ENCODE measurements at regions of chr15 and their contacts with region 1.

Region 1: GRCh38 chr15:39934397-39935071 is 619 bp downstream of the EIF2AK4 start:
- DNase-seq: no peak
- H3K4me3 Mint-ChIP-seq: peak overlapping the region; percentile 90
- H3K27ac Mint-ChIP-seq: peak overlapping the region; percentile 89
- H3K4me1 Mint-ChIP-seq: peaks cover 28% of the 10 kb centered on the region
- H3K27me3 Mint-ChIP-seq: no peaks in the 10 kb centered on the region
- CTCF ChIP-seq: no peak

Region 2: DNA sequence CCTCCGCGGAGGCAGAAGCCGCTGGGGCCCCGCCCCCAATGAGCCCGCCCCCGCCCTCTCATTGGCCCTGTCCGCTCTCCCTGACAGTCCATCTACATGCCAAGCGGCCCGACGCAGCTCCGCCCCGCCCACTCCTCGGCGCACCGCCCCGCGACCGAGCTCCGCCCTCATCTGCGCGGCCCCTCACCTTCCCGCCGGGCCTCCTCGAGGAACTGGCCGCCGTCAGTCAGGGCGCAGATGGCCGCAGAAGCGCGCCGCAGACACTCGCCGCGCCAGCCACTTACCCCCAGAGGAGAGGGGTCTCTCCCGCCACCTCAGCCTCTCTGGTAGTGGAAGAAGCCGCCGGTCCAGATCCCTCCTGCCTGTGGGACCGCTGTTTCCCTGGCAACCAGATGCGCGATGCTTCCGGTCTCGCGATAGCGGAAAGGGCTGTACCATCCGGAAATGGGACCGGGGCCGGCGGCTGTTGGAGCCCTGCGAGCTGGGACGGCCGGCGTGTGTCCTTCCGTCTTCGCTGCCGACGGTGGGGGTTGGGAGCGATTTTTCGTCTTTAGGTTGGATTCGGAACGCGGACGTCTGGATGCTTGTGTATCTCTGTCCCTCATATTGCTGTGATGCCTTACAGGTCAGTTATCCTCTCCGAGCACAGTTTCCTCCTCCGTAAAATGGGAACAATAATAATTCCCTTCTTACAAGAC is 151.9 kb before region 1 on chr15 and contains the start of gene FSIP1:
- CTCF ChIA-PET with region 1: interaction called, 14 read pairs
- POLR2A ChIA-PET with region 1: interaction called, 22 read pairs
- intact Hi-C with region 1: loop called (anchors 2 kb)
- DNase-seq: peak; percentile 96
- H3K4me3 Mint-ChIP-seq: peak within 1 kb of the TSS; percentile 91
- H3K27ac Mint-ChIP-seq: peak within 1 kb of the TSS; percentile 1
- H3K4me1 Mint-ChIP-seq: peaks cover 15% of the 10 kb centered on the region
- H3K27me3 Mint-ChIP-seq: no peaks in the 10 kb centered on the region
- CTCF ChIP-seq: no peak
- total RNA-seq, gene FSIP1: 2.2 and 3.2 TPM in 2 replicates

Region 3: DNA sequence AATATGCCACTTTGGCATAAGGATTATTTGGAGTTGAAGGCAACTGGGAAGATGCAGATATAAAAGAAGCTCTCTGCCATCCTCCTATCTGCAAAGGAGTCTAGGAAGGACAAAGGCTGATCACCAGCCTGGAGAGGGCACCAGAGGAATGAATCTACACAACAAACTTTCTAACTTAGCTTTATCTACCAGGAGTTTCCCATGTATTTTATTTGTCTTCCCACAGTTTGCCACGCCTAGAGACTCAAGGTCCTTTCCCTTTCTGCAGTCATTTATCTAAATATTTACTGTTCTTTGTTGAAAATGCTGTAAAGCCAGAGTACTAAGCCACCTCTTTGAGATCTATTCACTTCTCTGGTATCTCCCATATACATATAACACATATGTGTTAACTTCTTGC is 46.7 kb before region 1 on chr15:
- CTCF ChIA-PET with region 1: interaction called, 33 read pairs
- POLR2A ChIA-PET with region 1: interaction called, 24 read pairs
- intact Hi-C with region 1: loop called (anchors 2 kb)
- DNase-seq: peak; percentile 65
- H3K4me3 Mint-ChIP-seq: no peak overlapping the region
- H3K27ac Mint-ChIP-seq: peak overlapping the region; percentile 85
- H3K4me1 Mint-ChIP-seq: peaks cover 16% of the 10 kb centered on the region
- H3K27me3 Mint-ChIP-seq: no peaks in the 10 kb centered on the region
- CTCF ChIP-seq: peak; percentile 36

Region 4: DNA sequence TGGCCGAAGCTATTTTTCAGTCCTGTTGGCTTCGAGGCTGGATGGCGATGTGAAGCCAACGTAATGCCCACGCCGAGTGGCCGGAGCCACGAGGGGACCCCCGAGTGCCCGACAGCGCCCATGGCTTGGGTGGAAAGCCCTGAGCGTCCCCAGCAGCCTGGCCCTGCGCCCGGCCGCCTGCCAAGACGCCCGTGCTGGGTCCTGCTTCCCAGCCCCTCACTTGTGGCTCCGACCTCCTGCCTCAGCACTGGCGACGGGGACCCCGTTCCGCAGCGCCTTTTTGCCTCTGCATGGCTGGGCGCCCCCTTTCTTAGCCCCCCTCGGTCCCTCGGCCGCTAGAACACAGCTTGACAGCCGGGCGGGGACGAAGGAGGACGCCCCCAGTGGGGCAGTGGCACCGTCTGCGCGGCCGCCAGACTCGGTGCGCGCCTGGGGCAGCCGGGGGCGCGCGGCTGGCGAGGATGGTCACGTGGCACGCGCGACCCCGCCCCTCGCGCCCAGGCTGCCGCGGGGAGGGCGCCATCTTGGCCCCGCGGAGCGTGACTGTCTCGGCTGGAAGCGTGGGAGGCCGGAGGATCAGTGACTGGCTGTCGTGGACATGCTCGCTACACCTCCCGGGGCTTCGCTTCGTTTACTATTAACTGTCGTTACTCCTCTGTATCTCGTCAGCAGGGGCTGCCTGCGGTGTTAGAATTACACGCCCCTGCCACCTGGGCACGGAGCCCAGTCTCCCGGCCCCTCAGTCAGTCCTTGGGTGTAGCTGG is 13.8 kb before region 1 on chr15:
- CTCF ChIA-PET with region 1: interaction called, 6 read pairs
- POLR2A ChIA-PET with region 1: interaction called, 73 read pairs
- intact Hi-C with region 1: no loop called
- DNase-seq: peak; percentile 75
- H3K4me3 Mint-ChIP-seq: peak overlapping the region; percentile 78
- H3K27ac Mint-ChIP-seq: peak overlapping the region; percentile 73
- H3K4me1 Mint-ChIP-seq: peaks cover 28% of the 10 kb centered on the region
- H3K27me3 Mint-ChIP-seq: no peaks in the 10 kb centered on the region
- CTCF ChIP-seq: no peak

Region 5: GRCh38 chr15:39968273-39969001 is 33.9 kb after region 1 on chr15:
- CTCF ChIA-PET with region 1: interaction called, 5 read pairs
- POLR2A ChIA-PET with region 1: interaction called, 22 read pairs
- intact Hi-C with region 1: no loop called
- DNase-seq: no peak
- H3K4me3 Mint-ChIP-seq: no peak overlapping the region
- H3K27ac Mint-ChIP-seq: no peak overlapping the region
- H3K4me1 Mint-ChIP-seq: peaks cover 14% of the 10 kb centered on the region
- H3K27me3 Mint-ChIP-seq: no peaks in the 10 kb centered on the region
- CTCF ChIP-seq: no peak

Measured in MCF 10A (cell line).